IMR-90 (cell line): ENCODE measurements at regions of chr4 and their contacts with region 1.

Region 1: DNA sequence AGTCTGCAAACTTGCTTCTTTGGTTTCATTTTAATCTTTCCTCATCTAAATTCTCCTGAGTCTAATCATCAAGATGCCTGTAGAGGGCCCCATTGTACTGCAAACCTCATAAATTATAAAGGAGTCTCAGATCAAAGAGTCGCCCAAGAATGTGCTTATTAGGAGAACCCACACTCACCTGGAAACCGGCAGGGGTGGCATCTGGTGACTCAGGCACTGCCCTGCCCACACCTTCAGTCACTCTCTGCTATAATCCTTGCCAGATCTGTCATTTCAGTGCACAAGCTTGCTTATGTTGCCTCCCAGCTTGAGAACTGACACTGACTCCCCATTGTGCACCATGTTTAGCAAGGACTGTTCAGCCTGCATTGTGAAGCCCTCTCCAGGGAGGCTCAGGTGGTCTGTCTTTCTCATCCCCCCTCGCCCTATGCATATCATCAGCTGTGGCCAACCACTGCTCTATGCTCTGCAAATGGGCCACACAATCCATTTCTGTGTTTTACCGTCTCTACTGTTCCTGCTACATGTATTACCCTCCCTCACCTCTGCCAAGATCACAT is 12.4 kb downstream of the EPGN start:
- DNase-seq: peak; percentile 55
- ATAC-seq: peak; percentile 83
- H3K4me3 ChIP-seq: no peak overlapping the region
- H3K27ac ChIP-seq: no peak overlapping the region
- H3K4me1 ChIP-seq: no peaks in the 10 kb centered on the region
- H3K27me3 ChIP-seq: peaks cover 4% of the 10 kb centered on the region
- CTCF ChIP-seq: peak; percentile 74
- POLR2A ChIP-seq: no peak
- RAD21 ChIP-seq: peak; percentile 82

Region 2: DNA sequence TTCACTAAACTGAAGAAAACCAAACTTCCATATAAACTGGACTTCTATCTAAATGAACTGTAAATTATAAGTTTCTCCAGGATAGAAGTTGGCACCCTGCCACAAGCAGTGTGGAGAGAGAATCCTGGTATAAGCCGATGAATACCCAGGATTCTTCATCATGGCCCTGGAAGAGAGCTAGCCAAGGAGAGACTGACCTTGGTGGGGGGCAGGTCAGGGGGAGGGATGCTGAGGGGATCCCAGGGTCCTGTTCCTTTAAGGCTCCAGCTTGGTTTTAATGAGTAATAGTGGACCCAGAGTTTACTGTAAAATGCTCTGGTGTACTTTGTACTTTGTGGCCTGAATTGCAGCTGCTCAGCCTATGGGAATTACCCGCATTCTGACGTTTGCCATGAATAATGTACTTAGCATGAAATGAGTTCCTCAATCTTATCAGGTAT is 717.3 kb before region 1 on chr4:
- CTCF ChIA-PET with region 1: no interaction called
- POLR2A ChIA-PET with region 1: no interaction called
- dilution Hi-C with region 1: no loop called
- in situ Hi-C with region 1: no loop called
- intact Hi-C with region 1: no loop called
- DNase-seq: peak; percentile 86
- ATAC-seq: peak; percentile 61
- H3K4me3 ChIP-seq: no peak overlapping the region
- H3K27ac ChIP-seq: no peak overlapping the region
- H3K4me1 ChIP-seq: peaks cover 8% of the 10 kb centered on the region
- H3K27me3 ChIP-seq: no peaks in the 10 kb centered on the region
- CTCF ChIP-seq: no peak
- POLR2A ChIP-seq: no peak
- RAD21 ChIP-seq: no peak

Region 3: GRCh38 chr4:74370912-74371311 is 50.3 kb after region 1 on chr4:
- CTCF ChIA-PET with region 1: interaction called, 7 read pairs
- POLR2A ChIA-PET with region 1: no interaction called
- dilution Hi-C with region 1: no loop called
- in situ Hi-C with region 1: no loop called
- intact Hi-C with region 1: loop called (anchors 2 kb)
- DNase-seq: peak; percentile 64
- ATAC-seq: peak; percentile 99
- H3K4me3 ChIP-seq: no peak overlapping the region
- H3K27ac ChIP-seq: no peak overlapping the region
- H3K4me1 ChIP-seq: no peaks in the 10 kb centered on the region
- H3K27me3 ChIP-seq: no peaks in the 10 kb centered on the region
- CTCF ChIP-seq: peak; percentile 78
- POLR2A ChIP-seq: no peak
- RAD21 ChIP-seq: peak; percentile 83

Region 4: DNA sequence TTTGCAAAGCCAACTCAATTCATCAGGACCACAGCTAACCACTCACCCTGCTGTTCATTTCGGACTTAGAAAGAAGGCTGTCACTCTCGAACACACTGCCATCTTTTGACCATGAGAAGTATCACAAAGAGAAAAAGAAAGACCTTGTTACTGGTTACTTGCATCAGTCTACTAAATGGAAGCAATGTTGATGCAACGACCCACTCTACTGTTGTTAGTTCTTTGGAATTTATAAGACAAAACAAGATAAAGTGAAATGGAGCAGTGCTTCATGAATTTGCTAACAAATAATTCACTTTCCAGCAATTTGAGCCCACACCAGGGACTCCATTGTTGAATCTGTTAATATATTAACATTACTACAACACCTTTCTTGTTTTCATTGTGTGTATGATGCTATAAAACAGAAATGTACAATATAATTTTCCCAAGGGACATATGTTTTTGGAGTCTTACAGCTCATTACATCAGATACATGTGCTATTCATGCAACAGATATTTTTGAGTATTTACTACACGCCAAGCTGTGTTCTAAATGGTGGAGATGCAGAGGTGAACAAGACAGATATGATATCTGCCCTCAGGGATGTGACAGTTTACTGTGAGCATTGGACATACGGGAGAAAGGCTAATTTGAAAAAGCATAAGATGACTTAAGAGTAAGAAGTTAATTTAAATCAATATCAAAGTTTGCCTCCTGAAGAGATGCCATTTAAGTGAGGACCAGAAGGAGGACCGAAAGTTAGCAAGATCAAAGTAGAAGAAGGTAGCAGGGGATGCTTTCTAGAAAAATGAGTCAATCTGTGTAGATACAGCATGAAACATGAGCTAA is 211.5 kb after region 1 on chr4:
- CTCF ChIA-PET with region 1: no interaction called
- POLR2A ChIA-PET with region 1: interaction called, 4 read pairs
- dilution Hi-C with region 1: no loop called
- in situ Hi-C with region 1: no loop called
- intact Hi-C with region 1: loop called (anchors 5 kb)
- DNase-seq: peak; percentile 87
- ATAC-seq: peak; percentile 88
- H3K4me3 ChIP-seq: no peak overlapping the region
- H3K27ac ChIP-seq: no peak overlapping the region
- H3K4me1 ChIP-seq: peaks cover 4% of the 10 kb centered on the region; the same call in 1 of the 2 replicates
- H3K27me3 ChIP-seq: no peaks in the 10 kb centered on the region
- CTCF ChIP-seq: peak; percentile 78
- POLR2A ChIP-seq: no peak
- RAD21 ChIP-seq: peak; percentile 78

Region 5: DNA sequence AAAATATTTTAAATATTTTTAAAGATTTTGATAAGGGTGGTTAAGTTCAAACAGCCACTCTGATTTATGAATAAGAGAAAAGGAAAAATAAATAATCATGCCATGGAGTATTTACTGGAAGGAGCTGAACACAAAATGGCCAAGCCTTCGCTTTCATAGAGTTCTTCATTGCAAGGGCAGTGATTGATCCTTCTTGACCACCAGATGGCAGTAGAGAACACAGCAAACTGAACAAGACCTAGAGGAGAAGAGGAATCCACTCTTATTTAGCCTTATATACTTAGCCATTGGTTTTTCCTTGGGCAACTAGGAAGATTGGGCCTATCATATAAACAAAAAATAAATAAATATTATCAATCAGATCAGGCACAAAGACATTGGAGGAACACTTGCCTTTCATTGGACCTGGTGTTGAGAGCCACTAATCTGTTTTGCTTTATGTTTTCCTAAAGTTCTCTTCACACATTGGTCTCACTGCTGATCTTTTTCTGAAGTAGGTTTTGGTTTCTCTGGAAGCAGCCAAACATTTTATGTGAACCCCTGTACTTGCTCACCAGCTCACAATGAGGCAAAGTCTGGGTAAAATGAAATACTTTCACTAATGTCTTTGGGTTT is 554.2 kb after region 1 on chr4:
- CTCF ChIA-PET with region 1: no interaction called
- POLR2A ChIA-PET with region 1: no interaction called
- dilution Hi-C with region 1: no loop called
- in situ Hi-C with region 1: no loop called
- intact Hi-C with region 1: loop called (anchors 1 kb)
- DNase-seq: peak; percentile 84
- ATAC-seq: peak; percentile 96
- H3K4me3 ChIP-seq: no peak overlapping the region
- H3K27ac ChIP-seq: no peak overlapping the region
- H3K4me1 ChIP-seq: no peaks in the 10 kb centered on the region
- H3K27me3 ChIP-seq: peaks cover 3% of the 10 kb centered on the region; the same call in 1 of the 2 replicates
- CTCF ChIP-seq: peak; percentile 86
- POLR2A ChIP-seq: no peak
- RAD21 ChIP-seq: peak; percentile 68